Caco-2 (cell line): ENCODE measurements at regions of chr9 and their contacts with region 1.

Region 1: GRCh38 chr9:86126998-86127972 is 27.9 kb upstream of the GOLM1 start:
- DNase-seq: peak; percentile 81 to 91
- H3K4me3 ChIP-seq: no peak overlapping the region
- H3K4me3 Mint-ChIP-seq: peak overlapping the region; percentile 37
- H3K27ac Mint-ChIP-seq: peak overlapping the region; percentile 62
- H3K4me1 ChIP-seq: peaks cover 13% of the 10 kb centered on the region
- H3K4me1 Mint-ChIP-seq: no peaks in the 10 kb centered on the region
- H3K27me3 ChIP-seq: no peaks in the 10 kb centered on the region
- H3K27me3 Mint-ChIP-seq: no peaks in the 10 kb centered on the region
- CTCF ChIP-seq: no peak

Region 2: DNA sequence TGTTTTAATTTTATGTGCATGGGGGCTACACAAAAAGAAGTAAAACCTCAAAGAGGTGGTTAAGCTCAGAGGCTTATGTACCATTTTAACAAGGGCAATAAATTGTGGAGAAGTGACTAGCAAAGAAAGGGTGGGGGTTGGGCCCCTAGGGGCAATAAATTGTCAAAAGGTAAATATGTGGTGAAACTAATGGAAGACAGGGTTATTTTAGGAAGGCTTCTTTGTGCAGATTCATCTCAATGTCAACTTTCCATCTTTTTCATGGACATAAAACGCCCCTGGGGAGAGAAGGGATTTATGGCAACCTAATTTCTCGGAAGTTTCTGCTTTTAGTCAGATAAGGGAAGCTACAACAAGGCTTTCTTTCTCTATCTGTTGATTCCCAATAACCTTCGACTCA is 14.6 kb after region 1 on chr9:
- CTCF ChIA-PET with region 1: no interaction called
- POLR2A ChIA-PET with region 1: interaction called, 3 read pairs
- intact Hi-C with region 1: loop called (anchors 2 kb)
- DNase-seq: peak; percentile 47 to 48
- H3K4me3 ChIP-seq: no peak overlapping the region
- H3K4me3 Mint-ChIP-seq: no peak overlapping the region
- H3K27ac Mint-ChIP-seq: no peak overlapping the region
- H3K4me1 ChIP-seq: no peaks in the 10 kb centered on the region
- H3K4me1 Mint-ChIP-seq: peaks cover 14% of the 10 kb centered on the region
- H3K27me3 ChIP-seq: no peaks in the 10 kb centered on the region
- H3K27me3 Mint-ChIP-seq: no peaks in the 10 kb centered on the region
- CTCF ChIP-seq: no peak